ENCODE measurements at regions of chr17 and their contacts with region 1.

Region 1: DNA sequence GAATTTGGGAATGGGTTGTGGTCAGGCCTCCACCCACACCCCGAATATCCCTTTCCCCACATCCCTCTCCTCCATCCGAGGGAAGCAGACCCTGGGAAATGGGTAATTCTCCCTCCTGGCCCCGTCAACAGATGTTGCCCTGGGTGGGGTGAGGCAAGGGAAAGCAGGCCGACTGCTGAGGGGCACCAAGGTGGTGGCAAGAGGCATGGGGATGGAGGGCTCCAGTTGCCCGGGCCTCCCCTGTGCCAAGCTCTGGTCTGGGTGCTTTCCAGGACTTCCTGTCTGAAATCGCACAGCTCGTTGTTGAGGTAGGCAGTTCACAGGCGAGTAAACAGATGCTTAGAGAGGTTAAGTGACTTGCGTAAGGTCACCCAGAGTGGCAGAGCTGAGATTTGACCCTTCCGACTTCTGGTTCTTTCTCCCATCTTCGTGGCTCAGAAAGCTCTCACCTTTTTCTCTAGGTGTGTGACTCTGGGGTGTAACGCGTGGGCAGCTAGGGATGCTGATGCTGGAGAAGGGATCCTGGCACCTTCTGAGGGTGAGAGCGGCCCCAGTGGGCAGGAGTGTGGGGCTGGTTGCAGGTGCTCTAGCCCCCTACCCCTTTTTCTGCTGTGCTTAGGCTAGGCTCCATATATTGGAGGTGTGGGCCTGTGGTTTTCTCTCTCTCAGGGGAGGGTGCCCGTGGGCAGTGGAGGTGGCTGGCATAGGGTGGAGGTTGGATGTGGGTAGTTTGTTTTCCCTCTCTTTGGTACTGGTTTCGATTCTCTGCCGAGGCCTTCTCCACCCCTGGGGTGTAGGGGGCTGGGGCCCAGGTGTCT is 17.2 kb downstream of the RARA start:
- DNase-seq: no peak
- ATAC-seq: peak; percentile 28
- H3K4me3 ChIP-seq: peak overlapping the region in 1 of 2 experiments; percentile 15; a peak in 2 of 4 replicates
- H3K27ac ChIP-seq: peak overlapping the region; percentile 69
- H3K4me1 ChIP-seq: peaks cover 86% of the 10 kb centered on the region
- H3K27me3 ChIP-seq: no peaks in the 10 kb centered on the region
- CTCF ChIP-seq: no peak

Region 2: DNA sequence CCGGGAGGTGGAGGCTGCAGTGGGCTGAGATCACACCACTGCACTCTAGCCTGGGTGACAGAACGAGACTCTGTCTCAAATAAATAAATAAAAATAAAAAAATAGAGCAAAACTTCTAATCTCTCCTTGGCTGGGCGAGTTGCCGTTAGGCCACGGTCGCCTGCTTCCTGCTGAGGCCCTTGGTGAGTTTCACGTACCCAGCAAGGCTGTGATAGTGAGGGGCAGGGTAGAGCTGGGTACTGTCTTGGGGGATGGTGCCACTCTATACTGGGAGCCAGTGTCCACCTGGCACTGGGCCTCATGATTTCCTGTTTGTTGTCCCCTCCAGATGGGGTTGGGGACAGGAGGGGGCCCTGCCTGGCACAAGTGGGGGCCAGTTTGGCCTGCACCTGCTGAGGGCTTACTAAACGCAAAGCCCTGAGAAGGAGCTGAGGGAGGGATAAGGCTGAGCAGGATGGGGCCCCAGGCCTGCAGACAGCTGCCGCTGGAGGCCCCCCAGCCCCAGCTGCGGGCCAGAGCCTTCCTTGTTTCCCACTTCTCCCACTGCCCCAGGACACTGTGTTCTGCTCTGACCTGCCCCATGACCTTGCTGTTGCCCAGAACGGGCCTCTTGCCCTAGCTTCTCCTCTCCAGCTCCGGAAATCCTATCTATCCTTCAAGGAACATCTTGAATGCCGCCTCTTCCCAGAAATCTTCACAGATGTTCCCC is 12.9 kb after region 1 on chr17:
- CTCF ChIA-PET with region 1: no interaction called
- POLR2A ChIA-PET with region 1: interaction called, 11 read pairs
- in situ Hi-C with region 1: no loop called
- intact Hi-C with region 1: no loop called
- DNase-seq: no peak
- ATAC-seq: no peak
- H3K4me3 ChIP-seq: no peak overlapping the region
- H3K27ac ChIP-seq: peak overlapping the region; percentile 8
- H3K4me1 ChIP-seq: peaks cover 64% of the 10 kb centered on the region
- H3K27me3 ChIP-seq: no peaks in the 10 kb centered on the region
- CTCF ChIP-seq: no peak